Cardiac septum (tissue), 1 donor: ENCODE measurements at regions of chr12 and their contacts with region 1.

Region 1: GRCh38 chr12:85711735-85712390 is 124.3 kb downstream of the RASSF9 start:
- DNase-seq: no peak

Region 2: GRCh38 chr12:85765443-85765842 is 53.6 kb after region 1 on chr12:
- intact Hi-C with region 1: no loop called
- DNase-seq: no peak

Region 3: GRCh38 chr12:85836197-85837090 is 124.6 kb after region 1 on chr12 and contains the start of gene RASSF9:
- intact Hi-C with region 1: loop called (anchors 10 kb)
- DNase-seq: no peak
- total RNA-seq, gene RASSF9: 9.1 TPM

Region 4: DNA sequence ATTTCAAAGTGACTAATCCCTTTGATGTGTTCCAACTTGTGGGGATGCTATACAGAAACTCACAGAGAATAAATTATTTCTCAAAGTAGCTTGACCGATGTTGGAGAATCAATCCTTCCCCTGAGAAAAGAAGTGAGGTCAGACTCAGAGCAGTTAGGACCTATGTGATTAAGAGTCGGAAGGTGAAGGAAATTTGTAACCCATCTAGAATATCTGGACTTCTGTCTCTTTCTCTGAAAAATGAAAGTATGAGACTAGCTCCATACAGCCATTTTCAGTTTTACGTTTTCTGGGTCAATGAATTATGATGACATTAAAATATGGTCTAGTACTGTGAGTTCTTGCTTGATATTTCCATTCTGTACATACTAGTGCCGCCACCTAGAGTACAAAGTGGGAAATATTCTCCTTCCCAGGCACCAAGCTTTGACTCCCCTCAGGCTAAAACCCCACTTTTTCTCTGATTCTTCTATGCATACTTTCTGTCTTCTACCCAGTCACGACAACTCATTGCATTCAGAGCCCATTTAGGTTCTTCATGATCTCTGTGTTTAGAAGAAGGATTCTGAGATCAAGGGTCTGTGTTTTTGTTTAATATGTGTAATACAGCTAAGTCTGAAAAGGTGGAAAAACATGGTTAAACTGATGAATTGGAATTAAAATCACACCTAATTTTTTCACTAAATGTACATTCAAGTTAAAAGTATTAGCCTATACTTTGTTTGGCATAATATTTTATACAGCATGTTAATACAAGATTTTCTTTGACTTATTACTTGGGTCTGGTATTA is 155.3 kb after region 1 on chr12:
- intact Hi-C with region 1: loop called (anchors 10 kb)
- DNase-seq: no peak